ENCODE measurements at regions of chr19 and their contacts with region 1.

Region 1: GRCh38 chr19:46772170-46773017 is 16.0 kb downstream of the SLC1A5 start:
- DNase-seq: no peak
- H3K4me3 Mint-ChIP-seq: no peak overlapping the region
- H3K27ac Mint-ChIP-seq: no peak overlapping the region
- H3K4me1 Mint-ChIP-seq: peaks cover 5% of the 10 kb centered on the region
- H3K27me3 Mint-ChIP-seq: no peaks in the 10 kb centered on the region

Region 2: DNA sequence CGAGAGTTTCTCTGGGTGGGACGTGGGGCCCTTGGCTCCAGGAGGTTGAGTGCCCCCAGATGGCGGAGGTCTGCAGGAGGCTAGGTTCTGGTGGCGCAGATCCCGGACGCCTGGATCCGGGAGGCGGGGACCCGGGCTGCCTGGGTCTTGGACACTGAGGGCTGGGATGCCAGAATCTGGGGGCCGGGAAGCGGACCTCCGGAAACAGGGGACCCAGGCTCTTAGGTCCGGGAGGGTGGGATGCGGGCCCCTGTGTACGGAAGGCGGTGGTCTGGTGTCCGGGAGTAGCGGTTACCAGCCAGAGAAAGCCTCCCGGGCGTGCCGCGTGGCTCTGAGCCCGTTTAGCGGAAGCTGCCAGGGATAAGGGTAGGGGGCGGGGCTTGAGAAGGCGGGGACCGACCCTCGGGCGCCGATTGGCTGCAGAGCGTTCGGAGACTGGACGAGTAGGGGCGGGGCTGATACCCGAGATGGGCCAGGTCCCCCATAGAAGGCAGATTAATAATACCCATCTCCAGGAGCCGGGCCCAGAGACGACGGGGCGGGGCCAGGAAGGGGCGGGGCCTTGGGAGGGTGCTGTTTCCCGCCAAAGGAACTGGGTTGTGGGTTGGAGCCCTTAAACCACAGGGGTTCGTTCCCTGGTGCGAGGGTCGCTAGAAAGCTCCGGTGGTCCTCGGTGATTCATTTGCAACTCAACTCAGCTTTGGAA is 16.0 kb after region 1 on chr19 and contains the start of gene SLC1A5:
- CTCF ChIA-PET with region 1: interaction called, 9 read pairs
- POLR2A ChIA-PET with region 1: interaction called, 10 read pairs
- DNase-seq: peak; percentile 97
- H3K4me3 Mint-ChIP-seq: peak within 1 kb of the TSS; percentile 97
- H3K27ac Mint-ChIP-seq: peak within 1 kb of the TSS; percentile 93
- H3K4me1 Mint-ChIP-seq: peaks cover 65% of the 10 kb centered on the region
- H3K27me3 Mint-ChIP-seq: no peaks in the 10 kb centered on the region
- total RNA-seq, gene SLC1A5: 104 to 108 TPM

Measured in activated CD4-positive, alpha-beta T cell treated with anti-CD3 and anti-CD28 coated beads, Interleukin-2, amount 10 ng/mL, durations not matched to agents 7 days and 5 days (primary cell).